A549 (cell line): ENCODE measurements at regions of chr14 and their contacts with region 1.

Region 1: DNA sequence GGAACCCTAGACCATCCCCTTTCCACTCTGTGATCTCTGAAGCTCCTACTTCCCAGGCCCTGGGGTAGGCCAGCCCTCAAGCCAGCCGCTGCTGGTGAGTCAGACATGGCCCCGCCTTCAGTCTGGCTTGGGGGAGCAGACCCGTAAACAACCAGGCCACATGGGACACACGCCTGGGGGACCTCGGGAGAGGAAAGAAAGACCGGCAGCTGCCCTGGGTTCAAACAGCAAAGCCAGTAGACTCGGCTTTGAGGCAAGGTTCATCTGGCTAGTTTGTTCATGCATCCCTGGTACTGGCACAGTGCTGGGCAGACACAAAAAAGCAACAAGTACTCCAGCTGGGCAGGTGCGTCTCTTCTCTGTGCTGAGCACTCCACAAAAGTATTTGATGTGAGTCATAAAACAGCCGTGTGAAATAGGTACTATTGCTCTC is 101.9 kb downstream of the SETD3 start:
- DNase-seq: peak; percentile 72 to 78
- ATAC-seq: peak; percentile 82 to 85
- H3K4me3 ChIP-seq: no peak overlapping the region
- H3K27ac ChIP-seq: peak overlapping the region; percentile 72 to 85
- H3K4me1 ChIP-seq: peaks cover 38% of the 10 kb centered on the region
- CTCF ChIP-seq: no peak
- EP300 ChIP-seq: no peak
- POLR2A ChIP-seq: no peak
- RAD21 ChIP-seq: no peak

Region 2: DNA sequence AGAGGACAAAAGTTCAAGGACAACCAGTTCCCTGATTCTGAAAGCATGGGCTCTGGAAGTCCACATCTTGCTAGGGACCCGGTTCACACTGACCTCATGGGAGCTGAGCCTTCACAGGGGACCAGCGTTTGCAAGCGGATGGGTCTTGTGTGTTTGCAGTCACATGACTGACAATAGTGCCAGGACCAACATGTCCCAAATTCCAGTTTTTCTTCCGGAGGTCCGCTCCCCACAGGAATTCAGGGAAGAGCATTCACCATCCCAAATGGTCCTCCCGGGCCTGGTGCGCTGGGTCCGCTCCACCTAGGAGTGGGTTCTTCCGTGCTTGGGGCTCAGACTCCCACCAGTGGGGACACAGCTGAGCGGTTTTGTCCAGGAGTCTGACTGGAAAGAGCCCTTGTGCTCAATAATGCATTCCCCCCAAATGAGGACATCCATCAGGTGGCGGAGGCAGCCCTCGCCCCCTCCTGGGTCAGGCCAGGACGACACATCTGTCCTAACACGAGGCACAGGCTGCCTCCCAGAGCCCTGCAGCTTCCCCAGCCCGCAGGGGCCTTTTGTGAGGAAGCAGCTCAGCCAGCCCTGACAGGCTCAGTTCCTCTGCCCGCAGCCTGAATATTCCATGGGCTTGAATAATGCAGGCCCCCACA is 15.1 kb before region 1 on chr14:
- CTCF ChIA-PET with region 1: interaction called, 11 read pairs
- POLR2A ChIA-PET with region 1: no interaction called
- DNase-seq: no peak
- ATAC-seq: no peak; a peak in 1 of 6 replicates
- H3K4me3 ChIP-seq: no peak overlapping the region
- H3K27ac ChIP-seq: no peak overlapping the region
- H3K4me1 ChIP-seq: no peaks in the 10 kb centered on the region
- CTCF ChIP-seq: no peak
- EP300 ChIP-seq: no peak
- POLR2A ChIP-seq: no peak
- RAD21 ChIP-seq: no peak